ENCODE measurements at regions of chr2 and their contacts with region 1.

Region 1: DNA sequence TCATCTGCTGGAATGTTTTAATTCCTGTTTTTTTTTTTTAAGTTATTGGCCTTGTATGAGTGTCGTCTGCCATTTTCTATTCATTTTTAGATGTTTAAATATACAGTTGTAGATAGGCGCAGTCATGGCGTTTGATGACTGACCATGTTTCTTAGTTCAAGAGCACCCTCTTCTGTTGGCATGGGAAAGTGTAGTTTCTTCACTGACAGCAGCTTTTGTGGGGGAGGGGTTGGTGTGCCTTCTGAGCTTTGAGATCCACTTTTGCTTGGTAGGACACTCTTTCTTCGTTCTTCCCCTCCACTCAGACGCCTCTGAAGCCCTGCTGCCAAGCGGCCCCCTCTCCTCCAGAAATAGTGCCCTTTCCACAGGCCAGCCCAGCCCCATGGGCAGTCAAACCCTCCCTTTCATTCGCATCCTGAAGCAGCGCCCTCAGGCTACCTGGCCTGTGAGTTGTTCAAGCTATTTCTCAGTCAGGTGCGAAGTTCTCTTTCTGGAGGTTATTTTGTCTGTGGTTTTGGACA is 492.0 kb downstream of the TNS1 start:
- DNase-seq: peak; percentile 70
- H3K4me3 Mint-ChIP-seq: no peak overlapping the region
- H3K27ac Mint-ChIP-seq: no peak overlapping the region
- H3K4me1 Mint-ChIP-seq: peaks cover 2% of the 10 kb centered on the region
- H3K27me3 Mint-ChIP-seq: no peaks in the 10 kb centered on the region

Region 2: GRCh38 chr2:216683846-216684507 is 826.9 kb before region 1 on chr2:
- CTCF ChIA-PET with region 1: interaction called, 5 read pairs
- intact Hi-C with region 1: loop called (anchors 1 kb)
- DNase-seq: no peak
- H3K4me3 Mint-ChIP-seq: no peak overlapping the region
- H3K27ac Mint-ChIP-seq: no peak overlapping the region
- H3K4me1 Mint-ChIP-seq: peaks cover 2% of the 10 kb centered on the region
- H3K27me3 Mint-ChIP-seq: peaks cover 27% of the 10 kb centered on the region

Region 3: DNA sequence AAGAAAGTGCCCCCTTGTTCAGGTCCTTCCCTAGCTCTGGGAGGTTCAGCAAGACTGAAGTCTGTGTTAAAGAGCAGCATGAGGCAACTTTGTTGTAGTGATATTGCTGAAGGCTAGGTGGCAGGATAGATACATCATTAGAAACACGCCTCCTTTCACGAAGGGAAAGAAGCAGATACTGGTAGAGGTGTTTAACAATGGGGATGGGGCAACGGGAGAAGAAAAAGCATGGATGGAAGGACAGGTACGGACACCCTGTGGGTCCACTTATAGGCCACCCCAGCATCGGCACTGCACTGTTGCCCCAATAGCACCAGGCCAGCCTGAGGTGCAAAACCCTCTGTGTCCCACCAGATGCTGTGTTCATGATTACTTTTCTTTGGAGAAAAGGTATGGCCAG is 811.9 kb before region 1 on chr2:
- CTCF ChIA-PET with region 1: interaction called, 14 read pairs
- intact Hi-C with region 1: loop called (anchors 1 kb)
- DNase-seq: peak; percentile 27
- H3K4me3 Mint-ChIP-seq: no peak overlapping the region
- H3K27ac Mint-ChIP-seq: no peak overlapping the region
- H3K4me1 Mint-ChIP-seq: peaks cover 8% of the 10 kb centered on the region
- H3K27me3 Mint-ChIP-seq: peaks cover 40% of the 10 kb centered on the region

Region 4: GRCh38 chr2:216777650-216778273 is 733.1 kb before region 1 on chr2:
- CTCF ChIA-PET with region 1: no interaction called
- intact Hi-C with region 1: loop called (anchors 2 kb)
- DNase-seq: peak; percentile 61
- H3K4me3 Mint-ChIP-seq: no peak overlapping the region
- H3K27ac Mint-ChIP-seq: no peak overlapping the region
- H3K4me1 Mint-ChIP-seq: no peaks in the 10 kb centered on the region
- H3K27me3 Mint-ChIP-seq: peaks cover 2% of the 10 kb centered on the region

Region 5: DNA sequence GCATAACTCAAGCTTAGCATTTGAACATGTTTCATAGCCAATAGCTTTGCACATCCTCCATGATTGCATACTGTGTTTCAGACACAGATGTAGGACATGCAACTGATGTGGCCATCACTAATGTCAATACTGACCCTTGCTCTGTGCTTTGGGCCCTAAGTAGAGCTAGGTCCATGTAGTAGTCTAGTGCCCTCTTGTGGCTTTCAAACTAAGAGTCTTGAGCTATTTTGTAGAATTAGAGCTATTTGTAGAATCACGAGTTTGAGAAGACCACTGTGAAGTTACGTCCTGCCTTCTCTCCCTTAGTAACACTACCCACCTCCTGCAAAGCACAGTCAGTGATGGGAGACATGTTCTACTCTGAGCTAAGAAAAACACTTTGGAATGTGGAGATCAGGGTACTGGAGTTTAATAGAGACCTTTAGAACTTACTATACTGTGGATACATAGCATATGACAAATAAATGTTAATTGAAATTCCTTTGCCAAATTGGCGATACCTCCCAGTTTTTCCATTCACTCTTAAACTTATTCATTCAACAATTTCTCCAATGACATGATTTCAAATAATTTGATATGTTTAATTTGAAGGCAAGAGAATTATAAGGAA is 344.5 kb before region 1 on chr2:
- CTCF ChIA-PET with region 1: interaction called, 5 read pairs
- intact Hi-C with region 1: loop called (anchors 5 kb)
- DNase-seq: no peak
- H3K4me3 Mint-ChIP-seq: no peak overlapping the region
- H3K27ac Mint-ChIP-seq: no peak overlapping the region
- H3K4me1 Mint-ChIP-seq: peaks cover 15% of the 10 kb centered on the region
- H3K27me3 Mint-ChIP-seq: peaks cover 10% of the 10 kb centered on the region

Region 6: GRCh38 chr2:217756375-217757107 is 245.7 kb after region 1 on chr2:
- CTCF ChIA-PET with region 1: no interaction called
- intact Hi-C with region 1: loop called (anchors 5 kb)
- DNase-seq: peak; percentile 79
- H3K4me3 Mint-ChIP-seq: peak overlapping the region; percentile 54
- H3K27ac Mint-ChIP-seq: peak overlapping the region; percentile 19
- H3K4me1 Mint-ChIP-seq: peaks cover 23% of the 10 kb centered on the region
- H3K27me3 Mint-ChIP-seq: peaks cover 2% of the 10 kb centered on the region

Measured in activated naive CD4-positive, alpha-beta T cell treated with anti-CD3 and anti-CD28 coated beads for 36 hours (primary cell).